HAP-1 (cell line): ENCODE measurements at regions of chr21 and their contacts with region 1.

Region 1: GRCh38 chr21:43728467-43729390 is 9.8 kb downstream of the PDXK start:
- DNase-seq: peak; percentile 82 to 92
- H3K4me3 ChIP-seq: peak overlapping the region; percentile 62
- H3K4me1 ChIP-seq: peaks cover 8% of the 10 kb centered on the region
- H3K27me3 ChIP-seq: no peaks in the 10 kb centered on the region

Region 2: GRCh38 chr21:43775795-43776430 is 47.2 kb after region 1 on chr21 and contains the start of gene CSTB:
- in situ Hi-C with region 1: loop called (anchors 10 kb)
- DNase-seq: peak; percentile 72 to 95
- H3K4me3 ChIP-seq: peak within 1 kb of the TSS; percentile 58
- H3K4me1 ChIP-seq: 0 out of 2 replicates have a peak, but pooled peaks cover 3% of the 10 kb centered on the region
- H3K27me3 ChIP-seq: no peaks in the 10 kb centered on the region